ENCODE measurements at regions of chr19 and their contacts with region 1.

Region 1: DNA sequence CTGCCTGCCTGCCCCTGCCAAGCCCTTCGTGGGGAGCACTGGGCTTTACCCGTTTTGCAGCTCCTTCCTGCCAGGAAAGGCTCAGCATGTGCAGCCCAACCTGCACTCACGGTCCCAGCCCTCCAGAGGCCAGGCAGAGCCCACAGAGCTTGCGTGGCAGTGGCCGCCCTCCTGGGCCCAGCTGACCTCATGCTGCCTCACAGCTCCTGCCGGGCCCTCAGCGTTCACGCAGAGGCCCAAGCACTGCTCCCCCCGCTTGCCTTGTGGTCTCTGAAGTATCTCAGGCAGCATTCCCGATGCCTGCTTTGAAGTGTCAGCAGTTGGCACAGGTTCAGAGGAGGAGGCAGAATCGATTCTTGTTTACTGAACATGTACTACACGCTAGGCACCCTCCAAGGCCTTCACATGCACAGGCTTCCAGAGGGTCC is 32.5 kb downstream of the CAPN12 start:
- DNase-seq: no peak
- H3K4me3 ChIP-seq: peak overlapping the region in 1 of 59 donors; percentile 13
- H3K27ac ChIP-seq: peak overlapping the region; percentile 58 to 99 (median 90)
- H3K27me3 ChIP-seq: no peaks in the 10 kb centered on the region
- CTCF ChIP-seq: no peak

Region 2: GRCh38 chr19:38658462-38659306 is 53.1 kb before region 1 on chr19:
- intact Hi-C with region 1: loop called (anchors 5 kb)
- DNase-seq: no peak
- H3K4me3 ChIP-seq: peak overlapping the region in 15 of 59 donors; percentile 0 to 37 (median 14)
- H3K27ac ChIP-seq: peak overlapping the region; percentile 41 to 97 (median 92)
- H3K27me3 ChIP-seq: no peaks in the 10 kb centered on the region
- CTCF ChIP-seq: no peak

Region 3: GRCh38 chr19:38683393-38684080 is 28.2 kb before region 1 on chr19:
- intact Hi-C with region 1: no loop called
- DNase-seq: peak in 1 of 10 donors; percentile 81
- H3K4me3 ChIP-seq: no peak overlapping the region
- H3K27ac ChIP-seq: peak overlapping the region in 58 of 59 donors; percentile 15 to 91 (median 76)
- H3K27me3 ChIP-seq: no peaks in the 10 kb centered on the region
- CTCF ChIP-seq: no peak

Region 4: DNA sequence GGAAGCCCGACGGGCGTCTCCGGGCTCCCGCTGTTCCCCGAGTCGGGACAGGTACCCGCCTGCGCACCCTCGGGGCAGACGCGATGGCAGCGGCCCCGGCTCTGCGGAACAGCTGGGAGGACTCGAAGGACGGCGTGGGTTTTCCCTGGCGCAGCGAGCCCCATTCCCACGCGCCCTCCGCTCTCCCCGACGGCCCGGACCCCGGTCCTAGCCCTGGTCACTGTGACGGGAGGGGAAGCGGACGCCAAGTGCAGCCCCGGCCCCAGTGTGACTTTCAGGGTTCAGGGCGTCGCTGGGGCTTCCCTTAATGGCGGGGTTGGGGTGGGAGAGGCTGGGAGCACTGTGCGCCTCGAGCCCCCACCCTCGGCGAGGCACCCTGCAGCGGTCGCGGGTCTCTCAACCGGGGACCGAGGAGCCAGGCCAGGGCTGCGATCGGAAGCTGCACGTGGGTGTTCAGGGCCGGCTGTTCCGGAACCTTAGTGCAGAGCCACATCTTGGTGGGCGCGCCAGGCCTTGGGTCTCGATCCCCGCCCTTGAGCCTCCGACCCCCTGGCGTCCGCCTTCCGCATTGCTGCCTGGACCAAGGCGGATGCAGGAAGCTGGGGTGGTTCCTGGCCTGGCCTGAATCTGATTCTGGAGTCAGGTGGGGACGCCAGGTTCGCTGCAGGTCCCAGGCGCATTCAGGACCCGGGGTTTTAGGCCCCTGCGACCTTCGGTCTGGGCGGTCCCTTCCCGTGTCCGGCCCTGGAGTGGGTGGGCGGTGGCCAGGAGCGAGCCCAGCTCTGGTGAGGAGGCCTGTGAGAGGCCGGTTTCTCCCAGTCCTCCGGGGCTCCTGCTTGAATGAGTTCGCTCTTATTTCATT is 80.7 kb after region 1 on chr19:
- intact Hi-C with region 1: no loop called
- DNase-seq: peak in 1 of 10 donors; percentile 47
- H3K4me3 ChIP-seq: peak overlapping the region in 34 of 59 donors; percentile 2 to 50 (median 33)
- H3K27ac ChIP-seq: peak overlapping the region in 35 of 59 donors; percentile 10 to 79 (median 51)
- H3K27me3 ChIP-seq: no peaks in the 10 kb centered on the region
- CTCF ChIP-seq: peak in 9 of 56 donors; percentile 3 to 33 (median 18)